Activated T-helper 1 cell treated with anti-CD3 and anti-CD28 coated beads, Interleukin-12 subunit alpha, Interleukin-12 subunit beta, Interleukin-2, Interleukin-4 antibody, amounts not matched to agents 30 ng/mL and 10 ng/mL and 1 ng/mL, durations not matched to agents 14 hours and 24 hours and 36 hours (primary cell): ENCODE measurements at regions of chr3 and their contacts with region 1.

Region 1: GRCh38 chr3:123449102-123449996 is 459 bp upstream of the ADCY5 start:
- DNase-seq: no peak
- H3K4me3 Mint-ChIP-seq: no peak overlapping the region
- H3K27ac Mint-ChIP-seq: no peak overlapping the region
- H3K4me1 Mint-ChIP-seq: peaks cover 4% of the 10 kb centered on the region
- H3K27me3 Mint-ChIP-seq: peaks cover 60% of the 10 kb centered on the region

Region 2: GRCh38 chr3:123489400-123490004 is 40.2 kb after region 1 on chr3:
- intact Hi-C with region 1: loop called (anchors 1 kb)
- DNase-seq: peak; percentile 15
- H3K4me3 Mint-ChIP-seq: no peak overlapping the region
- H3K27ac Mint-ChIP-seq: no peak overlapping the region
- H3K4me1 Mint-ChIP-seq: no peaks in the 10 kb centered on the region
- H3K27me3 Mint-ChIP-seq: peaks cover 2% of the 10 kb centered on the region

Region 3: GRCh38 chr3:123552095-123552714 is 102.9 kb after region 1 on chr3:
- intact Hi-C with region 1: loop called (anchors 2 kb)
- DNase-seq: no peak
- H3K4me3 Mint-ChIP-seq: no peak overlapping the region
- H3K27ac Mint-ChIP-seq: no peak overlapping the region
- H3K4me1 Mint-ChIP-seq: no peaks in the 10 kb centered on the region
- H3K27me3 Mint-ChIP-seq: no peaks in the 10 kb centered on the region